ENCODE measurements at regions of chr3 and their contacts with region 1.

Region 1: GRCh38 chr3:110314512-110315114 is 757.0 kb upstream of the NECTIN3 start:
- DNase-seq: peak in 8 of 9 donors; percentile 25 to 66 (median 56)
- ATAC-seq: peak; percentile 76
- H3K4me3 ChIP-seq: no peak overlapping the region
- H3K4me3 Mint-ChIP-seq: peak overlapping the region in 1 of 10 donors; percentile 11
- H3K27ac ChIP-seq: no peak overlapping the region
- H3K27ac Mint-ChIP-seq: no peak overlapping the region
- H3K4me1 ChIP-seq: no peaks in the 10 kb centered on the region
- H3K4me1 Mint-ChIP-seq: peaks cover 0 to 5% (median 0%) of the 10 kb centered on the region in 7 donors
- H3K27me3 ChIP-seq: no peaks in the 10 kb centered on the region
- H3K27me3 Mint-ChIP-seq: peaks cover 0 to 6% (median 0%) of the 10 kb centered on the region in 5 donors

Region 2: DNA sequence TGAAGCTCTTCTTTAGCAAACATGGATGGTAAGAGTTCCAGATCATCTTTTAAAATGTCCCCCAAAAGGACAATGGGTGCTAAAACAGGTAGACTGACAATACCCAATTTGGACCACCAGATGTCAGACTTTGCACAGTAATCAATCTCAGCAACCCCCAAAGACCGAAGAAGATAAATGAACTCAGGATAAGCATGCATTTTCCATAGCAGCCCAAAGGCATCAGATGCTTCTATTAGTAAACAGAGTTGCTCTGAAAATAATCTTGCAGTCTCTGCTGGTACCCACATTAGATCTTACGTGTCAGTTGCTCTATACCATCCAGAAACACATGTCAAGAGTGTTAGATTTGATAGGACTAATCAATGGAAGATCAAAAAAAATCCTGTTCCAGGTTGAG is 1824.8 kb before region 1 on chr3:
- CTCF ChIA-PET with region 1: no interaction called
- POLR2A ChIA-PET with region 1: no interaction called
- intact Hi-C with region 1: loop called in 1 of 2 experiments (anchors 1 kb)
- DNase-seq: peak in 7 of 9 donors; percentile 43 to 64 (median 54)
- ATAC-seq: peak; percentile 86
- H3K4me3 ChIP-seq: no peak overlapping the region
- H3K4me3 Mint-ChIP-seq: no peak overlapping the region
- H3K27ac ChIP-seq: no peak overlapping the region
- H3K27ac Mint-ChIP-seq: no peak overlapping the region
- H3K4me1 ChIP-seq: no peaks in the 10 kb centered on the region
- H3K4me1 Mint-ChIP-seq: peaks cover 0 to 3% (median 0%) of the 10 kb centered on the region in 7 donors
- H3K27me3 ChIP-seq: no peaks in the 10 kb centered on the region
- H3K27me3 Mint-ChIP-seq: peaks cover 0 to 13% (median 0%) of the 10 kb centered on the region in 5 donors

Region 3: DNA sequence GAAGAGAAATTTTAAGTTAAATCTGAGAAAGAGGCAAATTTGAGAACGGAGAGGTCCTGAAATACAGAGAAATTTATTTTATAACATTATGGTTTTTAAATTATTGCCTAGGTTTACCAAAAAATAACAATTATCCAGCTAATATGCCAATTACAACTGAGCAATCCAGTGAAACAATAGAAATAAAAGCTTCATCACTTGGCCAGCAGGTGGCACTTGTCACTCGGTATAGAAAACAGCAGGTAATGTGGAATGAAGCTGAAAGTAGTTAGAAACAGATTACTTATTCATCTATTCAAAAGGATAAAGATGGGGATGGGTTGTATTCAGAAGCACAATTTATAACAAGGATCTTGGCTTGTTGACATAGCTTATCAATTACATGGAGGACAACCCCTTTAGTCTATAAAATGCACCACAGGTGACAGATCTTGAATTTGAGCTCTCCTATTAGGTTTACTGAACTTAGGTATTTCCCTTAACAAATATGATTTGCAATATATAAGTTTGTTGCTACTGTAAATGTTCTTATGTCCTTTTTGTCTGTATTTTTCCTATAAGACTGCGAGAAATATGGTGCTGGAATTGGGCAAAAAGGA is 1290.9 kb before region 1 on chr3:
- CTCF ChIA-PET with region 1: no interaction called
- POLR2A ChIA-PET with region 1: no interaction called
- intact Hi-C with region 1: loop called in 1 of 2 experiments (anchors 1 kb)
- DNase-seq: peak in 6 of 9 donors; percentile 2 to 42 (median 32)
- ATAC-seq: peak; percentile 60
- H3K4me3 ChIP-seq: no peak overlapping the region
- H3K4me3 Mint-ChIP-seq: no peak overlapping the region
- H3K27ac ChIP-seq: no peak overlapping the region
- H3K27ac Mint-ChIP-seq: no peak overlapping the region
- H3K4me1 ChIP-seq: no peaks in the 10 kb centered on the region
- H3K4me1 Mint-ChIP-seq: no peaks in the 10 kb centered on the region
- H3K27me3 ChIP-seq: no peaks in the 10 kb centered on the region
- H3K27me3 Mint-ChIP-seq: peaks cover 0 to 18% (median 0%) of the 10 kb centered on the region in 5 donors

Region 4: DNA sequence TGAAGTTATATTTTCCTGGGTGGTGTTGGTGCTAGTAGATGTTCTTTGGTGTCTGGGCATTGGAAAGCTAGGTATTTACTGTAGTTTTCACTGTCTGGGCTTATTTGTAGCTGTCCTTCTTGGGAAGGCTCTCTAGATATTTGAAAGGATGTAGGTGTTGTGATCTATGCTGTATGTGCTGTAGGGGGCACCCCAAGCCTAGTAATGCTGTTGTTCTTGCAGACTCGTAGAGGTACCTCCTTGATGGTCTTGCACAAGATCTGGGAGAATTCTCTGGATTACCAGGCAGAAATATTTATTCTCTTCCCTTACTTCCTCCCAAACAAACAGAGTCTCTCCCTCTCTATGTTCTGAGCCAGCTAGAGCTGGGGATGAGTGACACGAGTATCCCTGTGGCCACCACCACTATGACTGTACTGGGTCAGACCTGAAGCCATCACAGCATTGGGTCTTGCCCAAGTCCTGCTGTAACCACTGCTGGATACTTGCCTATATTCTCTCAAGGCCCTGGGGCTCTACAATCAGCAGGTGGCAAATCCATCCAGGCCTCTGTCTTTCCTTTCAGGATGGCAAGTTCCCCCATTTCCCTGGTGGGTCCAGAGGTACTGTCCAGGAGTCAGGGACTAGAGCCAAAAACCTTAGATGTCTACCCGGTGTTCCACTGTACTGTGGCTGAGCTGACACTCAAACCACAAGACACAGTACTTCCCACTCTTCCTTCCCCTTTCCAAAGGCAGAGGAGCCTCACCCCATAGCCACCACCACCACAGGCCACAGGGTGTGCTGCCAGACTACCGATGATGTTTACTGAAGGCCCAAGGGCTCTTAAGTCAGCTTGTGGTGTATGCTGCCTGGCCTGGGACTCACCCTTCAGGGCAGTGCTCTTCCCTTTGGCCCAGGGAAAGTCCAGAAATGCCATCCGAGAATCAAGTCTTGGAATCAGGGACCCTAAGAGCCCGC is 782.1 kb before region 1 on chr3:
- CTCF ChIA-PET with region 1: interaction called, 3 read pairs
- POLR2A ChIA-PET with region 1: no interaction called
- intact Hi-C with region 1: loop called in 1 of 2 experiments (anchors 1 kb)
- DNase-seq: peak in 7 of 9 donors; percentile 3 to 39 (median 20)
- ATAC-seq: peak; percentile 67
- H3K4me3 ChIP-seq: no peak overlapping the region
- H3K4me3 Mint-ChIP-seq: no peak overlapping the region
- H3K27ac ChIP-seq: no peak overlapping the region
- H3K27ac Mint-ChIP-seq: no peak overlapping the region
- H3K4me1 ChIP-seq: no peaks in the 10 kb centered on the region
- H3K4me1 Mint-ChIP-seq: no peaks in the 10 kb centered on the region
- H3K27me3 ChIP-seq: no peaks in the 10 kb centered on the region
- H3K27me3 Mint-ChIP-seq: peaks cover 0 to 5% (median 0%) of the 10 kb centered on the region in 5 donors

Region 5: GRCh38 chr3:110664148-110664547 is 349.5 kb after region 1 on chr3:
- CTCF ChIA-PET with region 1: no interaction called
- POLR2A ChIA-PET with region 1: no interaction called
- intact Hi-C with region 1: no loop called
- DNase-seq: no peak
- ATAC-seq: no peak
- H3K4me3 ChIP-seq: no peak overlapping the region
- H3K4me3 Mint-ChIP-seq: no peak overlapping the region
- H3K27ac ChIP-seq: no peak overlapping the region
- H3K27ac Mint-ChIP-seq: no peak overlapping the region
- H3K4me1 ChIP-seq: no peaks in the 10 kb centered on the region
- H3K4me1 Mint-ChIP-seq: no peaks in the 10 kb centered on the region
- H3K27me3 ChIP-seq: no peaks in the 10 kb centered on the region
- H3K27me3 Mint-ChIP-seq: peaks cover 0 to 23% (median 11%) of the 10 kb centered on the region in 5 donors

Region 6: GRCh38 chr3:111080413-111080812 is 765.8 kb after region 1 on chr3:
- CTCF ChIA-PET with region 1: interaction called, 3 read pairs
- POLR2A ChIA-PET with region 1: no interaction called
- intact Hi-C with region 1: loop called in 1 of 2 experiments (anchors 1 kb)
- DNase-seq: no peak
- ATAC-seq: no peak
- H3K4me3 ChIP-seq: no peak overlapping the region
- H3K4me3 Mint-ChIP-seq: no peak overlapping the region
- H3K27ac ChIP-seq: no peak overlapping the region
- H3K27ac Mint-ChIP-seq: no peak overlapping the region
- H3K4me1 ChIP-seq: no peaks in the 10 kb centered on the region
- H3K4me1 Mint-ChIP-seq: no peaks in the 10 kb centered on the region
- H3K27me3 ChIP-seq: no peaks in the 10 kb centered on the region
- H3K27me3 Mint-ChIP-seq: peaks cover 8 to 17% (median 11%) of the 10 kb centered on the region in 5 donors

Region 7: DNA sequence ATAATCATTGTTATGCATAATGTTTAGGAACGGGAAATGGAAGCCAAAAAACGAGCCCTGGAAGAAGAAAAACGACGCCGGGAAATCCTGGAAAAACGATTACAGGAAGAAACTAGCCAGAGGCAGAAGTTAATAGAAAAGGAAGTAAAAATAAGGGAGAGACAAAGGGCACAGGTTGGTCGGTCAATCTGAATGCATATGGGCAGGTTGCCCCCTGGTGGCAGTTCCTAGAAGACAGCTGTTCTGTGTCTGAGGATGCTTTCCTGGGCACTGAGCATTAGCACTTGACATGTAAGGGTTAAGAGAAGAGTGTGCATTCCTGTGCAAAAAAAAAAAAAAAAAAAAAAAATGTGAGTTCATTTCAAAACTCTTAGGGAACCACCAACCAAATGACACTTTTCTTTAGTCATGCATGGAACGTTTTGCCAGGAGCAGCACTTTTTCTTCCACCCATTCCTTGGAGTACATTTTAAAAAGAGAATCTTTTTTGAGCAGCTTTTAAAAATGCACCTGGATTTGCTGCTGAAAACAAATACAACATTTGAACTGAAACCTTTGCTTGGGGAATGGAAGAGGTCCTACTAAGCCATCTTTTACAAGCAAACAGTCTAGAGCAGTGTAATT is 1653.2 kb after region 1 on chr3:
- CTCF ChIA-PET with region 1: no interaction called
- POLR2A ChIA-PET with region 1: no interaction called
- intact Hi-C with region 1: loop called in 1 of 2 experiments (anchors 2 kb)
- DNase-seq: peak; percentile 44 to 72 (median 64)
- ATAC-seq: peak; percentile 96
- H3K4me3 ChIP-seq: no peak overlapping the region
- H3K4me3 Mint-ChIP-seq: peak overlapping the region in 2 of 10 donors; percentile 12 to 44
- H3K27ac ChIP-seq: no peak overlapping the region
- H3K27ac Mint-ChIP-seq: peak overlapping the region in 1 of 9 donors; percentile 71
- H3K4me1 ChIP-seq: peaks cover 0 to 4% of the 10 kb centered on the region in 2 donors
- H3K4me1 Mint-ChIP-seq: peaks cover 3 to 13% (median 5%) of the 10 kb centered on the region in 7 donors
- H3K27me3 ChIP-seq: no peaks in the 10 kb centered on the region
- H3K27me3 Mint-ChIP-seq: no peaks in the 10 kb centered on the region

Measured in naive thymus-derived CD4-positive, alpha-beta T cell (primary cell).